Sigmoid colon (tissue), 7 donors: ENCODE measurements at regions of chr17 and their contacts with region 1.

Region 1: DNA sequence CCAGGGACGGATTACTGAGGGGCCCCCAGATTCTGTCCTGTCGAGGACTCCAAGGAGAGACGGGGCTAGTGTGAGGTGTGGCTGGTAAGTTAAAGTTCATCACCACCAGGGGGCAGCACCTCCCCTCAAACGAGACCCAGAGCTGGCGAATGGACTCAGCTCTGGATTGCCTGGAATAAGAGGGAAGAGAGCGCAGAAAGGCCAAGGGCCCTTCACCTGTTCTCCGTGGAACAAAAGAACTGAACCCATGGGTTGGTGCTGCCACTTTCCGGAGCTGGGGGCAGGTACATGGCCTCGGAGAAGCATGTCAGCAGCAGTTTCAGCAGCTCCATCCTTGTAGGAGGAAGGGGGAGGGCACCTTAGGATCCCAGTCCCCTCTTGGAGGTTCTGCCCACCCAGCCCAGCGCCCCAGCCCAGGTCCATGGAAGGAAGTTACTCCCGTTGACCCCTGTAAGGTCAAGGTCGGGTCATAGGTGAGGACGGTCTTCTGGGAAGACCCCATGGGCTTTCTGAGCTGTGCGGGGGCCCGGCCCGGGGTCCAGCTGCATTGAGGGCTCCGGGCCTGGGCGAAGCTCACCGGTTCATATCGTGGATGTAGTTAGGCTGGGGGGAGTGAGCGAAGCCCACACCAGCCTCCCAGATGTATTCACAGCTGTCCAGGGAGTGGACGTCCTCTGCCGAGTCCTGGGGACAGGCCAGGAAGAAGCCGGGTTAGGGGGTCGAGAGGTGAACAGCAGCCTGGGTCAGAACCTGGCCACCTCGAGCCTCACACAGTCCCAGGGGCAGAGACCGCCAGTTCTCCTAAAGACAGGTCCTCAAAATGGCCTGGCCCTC is 10.7 kb downstream of the HID1 start:
- DNase-seq: peak; percentile 95
- H3K4me3 ChIP-seq: no peak overlapping the region
- H3K27ac ChIP-seq: no peak overlapping the region
- H3K4me1 ChIP-seq: peaks cover 0 to 4% (median 2%) of the 10 kb centered on the region in 4 donors
- H3K27me3 ChIP-seq: no peaks in the 10 kb centered on the region
- CTCF ChIP-seq: peak; percentile 61 to 85 (median 70)
- EP300 ChIP-seq: no peak
- POLR2A ChIP-seq: no peak

Region 2: GRCh38 chr17:74923533-74924249 is 38.2 kb before region 1 on chr17:
- intact Hi-C with region 1: loop called (anchors 1 kb)
- DNase-seq: no peak
- H3K4me3 ChIP-seq: peak overlapping the region in 3 of 4 donors; percentile 24 to 38 (median 35)
- H3K27ac ChIP-seq: no peak overlapping the region
- H3K4me1 ChIP-seq: peaks cover 0 to 26% (median 22%) of the 10 kb centered on the region in 4 donors
- H3K27me3 ChIP-seq: peaks cover 36 to 92% (median 69%) of the 10 kb centered on the region in 3 donors
- CTCF ChIP-seq: peak; percentile 27 to 72 (median 41)
- EP300 ChIP-seq: no peak
- POLR2A ChIP-seq: no peak

Region 3: DNA sequence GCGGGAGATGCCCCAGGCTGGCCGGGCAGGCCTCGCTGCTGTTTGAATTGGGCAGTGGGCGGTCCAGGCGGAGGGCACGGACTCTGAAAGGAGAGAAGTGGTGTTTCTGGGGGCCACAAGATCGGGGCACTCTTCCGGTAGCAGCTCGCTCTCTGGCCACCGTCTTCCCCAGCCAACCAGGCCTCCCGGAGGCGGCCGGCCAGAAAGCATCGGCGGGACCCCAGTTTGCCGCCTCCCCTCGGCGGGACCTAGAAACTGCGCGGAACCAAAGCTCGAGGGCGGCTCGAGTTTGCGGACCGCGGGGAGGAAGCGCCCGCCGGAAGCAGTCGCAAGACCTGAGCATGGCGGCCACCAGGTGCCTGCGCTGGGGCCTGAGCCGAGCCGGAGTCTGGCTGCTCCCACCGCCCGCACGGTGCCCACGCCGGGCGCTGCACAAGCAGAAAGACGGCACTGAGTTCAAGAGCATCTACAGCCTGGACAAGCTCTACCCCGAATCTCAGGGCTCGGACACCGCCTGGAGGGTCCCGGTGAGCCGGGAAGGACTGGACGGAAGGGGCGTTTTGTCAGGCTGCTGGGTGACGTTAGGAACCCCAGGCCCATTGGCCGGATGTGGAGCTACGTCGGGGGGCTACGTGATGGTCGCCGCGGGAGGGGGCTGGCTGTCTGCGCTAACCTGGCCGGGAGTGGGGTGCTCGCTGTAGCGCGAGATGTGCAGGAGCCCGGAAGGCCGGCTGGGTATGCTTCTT is 50.6 kb after region 1 on chr17 and contains the start of gene MRPL58:
- intact Hi-C with region 1: loop called (anchors 1 kb)
- DNase-seq: peak; percentile 93
- H3K4me3 ChIP-seq: peak within 1 kb of the TSS; percentile 76 to 82 (median 78)
- H3K27ac ChIP-seq: peak within 1 kb of the TSS; percentile 93 to 99 (median 96)
- H3K4me1 ChIP-seq: peaks cover 0 to 34% (median 29%) of the 10 kb centered on the region in 4 donors
- H3K27me3 ChIP-seq: no peaks in the 10 kb centered on the region
- CTCF ChIP-seq: peak; percentile 51 to 73 (median 57)
- EP300 ChIP-seq: no peak
- POLR2A ChIP-seq: peak in 1 of 2 donors; percentile 5
- total RNA-seq, gene MRPL58: 46.3 to 104 (median 62.5) TPM

Region 4: DNA sequence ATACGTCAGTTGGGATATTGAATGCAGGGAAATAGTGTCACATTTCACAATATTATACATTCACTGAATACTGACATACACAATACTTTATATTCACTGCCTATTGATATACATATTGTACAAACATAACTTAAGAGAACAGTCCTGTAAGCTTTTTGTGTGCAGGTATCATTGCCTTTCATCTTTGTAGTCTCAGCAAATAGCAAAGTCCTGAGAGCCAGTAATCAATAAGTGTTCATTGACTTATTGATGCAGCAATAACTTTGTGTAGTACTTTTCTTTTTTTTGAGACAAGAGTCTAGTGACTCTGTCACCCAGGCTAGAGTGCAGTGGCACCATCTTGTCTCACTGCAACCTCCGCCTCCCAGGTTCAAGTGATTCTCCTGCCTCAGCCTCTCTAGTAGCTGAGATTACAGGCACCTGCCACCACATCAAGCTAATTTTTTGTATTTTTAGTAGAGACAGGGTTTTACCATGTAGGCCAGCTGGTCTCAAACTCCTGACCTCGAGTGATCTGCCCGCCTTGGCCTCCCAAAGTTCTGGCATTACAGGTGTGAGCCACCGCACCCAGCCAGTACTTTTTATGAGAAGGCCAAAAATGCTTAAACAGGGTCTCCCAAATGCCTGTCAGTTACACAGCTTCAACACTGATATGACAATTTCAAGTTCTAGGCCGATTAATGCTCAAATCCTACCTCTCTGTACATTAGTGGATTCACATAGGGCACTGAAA is 238.2 kb after region 1 on chr17:
- intact Hi-C with region 1: loop called (anchors 2 kb)
- DNase-seq: no peak
- H3K4me3 ChIP-seq: no peak overlapping the region
- H3K27ac ChIP-seq: no peak overlapping the region
- H3K4me1 ChIP-seq: peaks cover 0 to 9% (median 4%) of the 10 kb centered on the region in 4 donors
- H3K27me3 ChIP-seq: no peaks in the 10 kb centered on the region
- CTCF ChIP-seq: no peak
- EP300 ChIP-seq: no peak
- POLR2A ChIP-seq: no peak